ENCODE measurements at regions of chr17 and their contacts with region 1.

Region 1: GRCh38 chr17:16285957-16286640 is 67.2 kb downstream of the CENPV start:
- DNase-seq: peak; percentile 98
- ATAC-seq: peak; percentile 79
- H3K4me3 ChIP-seq: peak overlapping the region; percentile 5; the same call in 1 of the 2 replicates
- H3K27ac ChIP-seq: peak overlapping the region; percentile 98
- H3K4me1 ChIP-seq: peaks cover 24% of the 10 kb centered on the region
- H3K27me3 ChIP-seq: no peaks in the 10 kb centered on the region
- CTCF ChIP-seq: peak; percentile 45
- POLR2A ChIP-seq: peak; percentile 5; the same call in 1 of the 2 replicates
- RAD21 ChIP-seq: peak; percentile 26; the same call in 1 of the 2 replicates

Region 2: GRCh38 chr17:16068323-16068722 is 217.8 kb before region 1 on chr17:
- CTCF ChIA-PET with region 1: no interaction called
- POLR2A ChIA-PET with region 1: no interaction called
- dilution Hi-C with region 1: no loop called
- in situ Hi-C with region 1: no loop called
- intact Hi-C with region 1: no loop called
- DNase-seq: peak; percentile 17
- ATAC-seq: peak; percentile 35; the same call in 1 of the 2 replicates
- H3K4me3 ChIP-seq: no peak overlapping the region
- H3K27ac ChIP-seq: no peak overlapping the region
- H3K4me1 ChIP-seq: peaks cover 4% of the 10 kb centered on the region; the same call in 1 of the 2 replicates
- H3K27me3 ChIP-seq: no peaks in the 10 kb centered on the region
- CTCF ChIP-seq: no peak
- POLR2A ChIP-seq: no peak
- RAD21 ChIP-seq: no peak

Region 3: DNA sequence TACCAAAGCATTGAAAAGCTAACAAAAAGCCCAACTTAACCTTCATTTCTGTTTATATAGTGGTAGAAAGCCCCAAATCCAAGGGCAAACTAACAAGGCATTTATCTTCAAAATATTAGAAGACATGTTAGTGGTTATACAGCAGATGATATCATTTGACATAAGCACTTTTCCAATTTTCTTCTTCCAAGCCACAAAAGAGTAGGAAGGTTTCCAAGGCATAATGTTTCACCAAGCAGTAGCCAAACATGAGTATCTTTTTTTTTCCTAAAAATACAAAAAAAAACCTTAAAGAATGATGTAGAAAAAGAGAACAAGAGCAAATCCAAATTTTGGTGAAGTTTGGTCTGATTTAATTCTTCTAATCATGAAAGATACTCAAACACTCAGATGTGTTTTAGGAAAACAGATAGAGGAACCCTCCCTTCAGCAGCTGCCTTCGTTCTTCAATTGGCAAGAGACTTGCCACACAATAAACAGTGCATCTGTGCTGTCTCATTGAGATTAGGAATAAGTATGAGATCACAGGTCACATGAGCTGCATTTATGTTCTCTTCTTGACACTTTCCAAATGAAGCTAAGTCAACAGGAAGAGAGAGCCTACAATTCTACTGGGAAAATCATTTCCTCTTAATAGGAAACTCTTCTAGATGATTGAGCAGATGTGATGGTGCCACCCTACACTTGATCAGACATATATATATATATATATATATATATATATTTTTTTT is 179.8 kb before region 1 on chr17:
- CTCF ChIA-PET with region 1: no interaction called
- POLR2A ChIA-PET with region 1: no interaction called
- dilution Hi-C with region 1: no loop called
- in situ Hi-C with region 1: no loop called
- intact Hi-C with region 1: no loop called
- DNase-seq: peak; percentile 79
- ATAC-seq: peak; percentile 62
- H3K4me3 ChIP-seq: no peak overlapping the region
- H3K27ac ChIP-seq: no peak overlapping the region
- H3K4me1 ChIP-seq: 0 out of 2 replicates have a peak, but pooled peaks cover 2% of the 10 kb centered on the region
- H3K27me3 ChIP-seq: no peaks in the 10 kb centered on the region
- CTCF ChIP-seq: no peak
- POLR2A ChIP-seq: no peak
- RAD21 ChIP-seq: no peak

Region 4: DNA sequence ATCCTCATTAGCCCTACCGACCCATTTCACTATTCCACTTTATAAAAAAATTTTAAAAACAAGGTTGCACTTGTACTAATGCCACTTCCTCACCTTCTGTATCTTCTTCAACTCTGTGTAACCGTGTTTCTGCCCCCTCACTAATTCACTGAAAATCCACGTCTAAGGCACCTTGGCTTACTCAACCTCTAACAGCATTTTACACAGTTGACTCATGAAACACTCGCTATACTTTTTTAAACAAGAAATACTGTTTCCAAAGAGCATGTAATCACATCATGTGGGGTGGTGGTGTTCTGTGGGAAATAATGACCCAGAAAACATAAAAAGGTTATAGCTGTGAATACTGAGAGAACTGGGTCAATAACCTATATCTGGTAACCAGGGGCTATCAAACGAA is 150.6 kb before region 1 on chr17:
- CTCF ChIA-PET with region 1: no interaction called
- POLR2A ChIA-PET with region 1: no interaction called
- dilution Hi-C with region 1: no loop called
- in situ Hi-C with region 1: no loop called
- intact Hi-C with region 1: no loop called
- DNase-seq: peak; percentile 69
- ATAC-seq: peak; percentile 71
- H3K4me3 ChIP-seq: no peak overlapping the region
- H3K27ac ChIP-seq: no peak overlapping the region
- H3K4me1 ChIP-seq: peaks cover 3% of the 10 kb centered on the region
- H3K27me3 ChIP-seq: no peaks in the 10 kb centered on the region
- CTCF ChIP-seq: no peak
- POLR2A ChIP-seq: no peak
- RAD21 ChIP-seq: no peak

Region 5: GRCh38 chr17:16215273-16215964 is 70.7 kb before region 1 on chr17 and contains the start of gene NCOR1:
- CTCF ChIA-PET with region 1: interaction called, 6 read pairs
- POLR2A ChIA-PET with region 1: no interaction called
- dilution Hi-C with region 1: no loop called
- in situ Hi-C with region 1: no loop called
- intact Hi-C with region 1: loop called (anchors 1 kb)
- DNase-seq: peak; percentile 93
- ATAC-seq: peak; percentile 95
- H3K4me3 ChIP-seq: peak within 1 kb of the TSS; percentile 71
- H3K27ac ChIP-seq: peak within 1 kb of the TSS; percentile 87
- H3K4me1 ChIP-seq: peaks cover 6% of the 10 kb centered on the region
- H3K27me3 ChIP-seq: no peaks in the 10 kb centered on the region
- CTCF ChIP-seq: peak; percentile 43
- POLR2A ChIP-seq: peak; percentile 86
- RAD21 ChIP-seq: peak; percentile 23
- total RNA-seq, gene NCOR1: 78.0 and 80.3 TPM in 2 replicates

Region 6: DNA sequence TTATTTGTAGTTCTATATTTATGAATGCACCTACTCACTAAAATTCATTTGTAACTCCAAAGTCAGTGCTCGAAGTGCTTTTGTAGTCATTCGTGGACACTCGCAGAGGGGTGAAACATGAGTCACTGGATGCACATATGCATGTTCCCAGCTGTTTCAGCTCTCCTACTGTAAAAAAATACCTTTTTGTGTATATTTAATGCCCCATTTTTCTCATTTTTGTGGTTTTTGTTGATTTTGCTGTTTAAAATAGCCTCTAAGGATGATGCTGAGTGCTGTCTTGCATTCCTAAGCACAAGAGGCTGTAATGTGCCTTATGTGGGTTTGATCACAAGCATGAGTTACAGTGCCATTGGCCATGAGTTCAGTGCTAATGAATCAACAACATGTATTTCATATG is 36.5 kb after region 1 on chr17:
- CTCF ChIA-PET with region 1: no interaction called
- POLR2A ChIA-PET with region 1: no interaction called
- dilution Hi-C with region 1: no loop called
- in situ Hi-C with region 1: no loop called
- intact Hi-C with region 1: loop called (anchors 2 kb)
- DNase-seq: peak; percentile 96
- ATAC-seq: peak; percentile 99
- H3K4me3 ChIP-seq: no peak overlapping the region
- H3K27ac ChIP-seq: no peak overlapping the region
- H3K4me1 ChIP-seq: 0 out of 2 replicates have a peak, but pooled peaks cover 2% of the 10 kb centered on the region
- H3K27me3 ChIP-seq: no peaks in the 10 kb centered on the region
- CTCF ChIP-seq: no peak
- POLR2A ChIP-seq: no peak
- RAD21 ChIP-seq: no peak

Region 7: DNA sequence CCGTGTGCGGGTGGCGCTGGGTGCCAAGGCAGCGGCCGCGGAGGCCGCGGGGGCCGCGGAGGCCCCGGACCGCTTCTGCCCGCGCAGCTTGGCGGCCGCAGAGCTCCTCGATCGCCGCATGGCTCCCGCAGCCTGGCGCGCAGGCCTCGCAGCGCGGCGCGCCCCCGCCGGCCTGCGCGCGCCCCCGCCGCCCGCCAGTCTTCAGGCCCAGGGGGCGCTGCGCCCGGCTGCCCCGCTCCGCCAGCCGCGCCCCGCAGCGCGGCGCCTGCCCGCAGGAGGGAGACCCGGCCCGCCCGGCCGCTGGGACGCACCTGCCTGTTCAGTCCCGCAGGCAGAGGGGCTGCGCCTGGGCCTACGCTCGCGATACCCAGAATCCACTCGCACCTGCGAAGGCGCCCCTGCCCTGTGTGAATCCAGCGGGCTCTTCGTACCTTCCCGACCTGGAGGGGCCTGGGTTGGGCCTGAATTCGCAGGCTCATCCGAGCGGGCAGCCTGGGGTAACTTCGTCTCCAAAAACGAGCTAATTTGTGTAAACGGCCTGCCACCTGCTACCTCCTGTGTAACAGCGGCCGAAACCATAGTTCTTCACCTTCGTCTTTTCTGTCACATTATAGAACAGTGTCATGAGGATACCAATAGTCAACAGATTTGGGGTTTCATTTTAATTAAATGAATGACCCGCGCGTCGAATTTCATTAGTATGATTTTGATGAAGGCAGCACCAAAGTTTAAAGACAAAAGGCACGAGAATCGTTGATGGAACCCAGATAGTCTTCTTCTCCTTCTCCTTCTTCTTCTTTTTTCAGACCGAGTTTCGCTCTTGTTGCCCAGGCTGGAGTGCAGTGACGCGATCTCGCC is 67.4 kb after region 1 on chr17 and contains the start of gene CENPV:
- CTCF ChIA-PET with region 1: interaction called, 3 read pairs
- POLR2A ChIA-PET with region 1: no interaction called
- dilution Hi-C with region 1: no loop called
- in situ Hi-C with region 1: no loop called
- intact Hi-C with region 1: loop called (anchors 5 kb)
- DNase-seq: peak; percentile 34
- ATAC-seq: peak; percentile 82
- H3K4me3 ChIP-seq: peak within 1 kb of the TSS; percentile 73
- H3K27ac ChIP-seq: peak within 1 kb of the TSS; percentile 33
- H3K4me1 ChIP-seq: 0 out of 2 replicates have a peak, but pooled peaks cover 2% of the 10 kb centered on the region
- H3K27me3 ChIP-seq: no peaks in the 10 kb centered on the region
- CTCF ChIP-seq: peak; percentile 37
- POLR2A ChIP-seq: no peak
- RAD21 ChIP-seq: no peak
- total RNA-seq, gene CENPV: 35.3 and 38.6 TPM in 2 replicates

Region 8: GRCh38 chr17:16477255-16477654 is 191.2 kb after region 1 on chr17:
- CTCF ChIA-PET with region 1: no interaction called
- POLR2A ChIA-PET with region 1: no interaction called
- dilution Hi-C with region 1: no loop called
- in situ Hi-C with region 1: no loop called
- intact Hi-C with region 1: no loop called
- DNase-seq: peak; percentile 89
- ATAC-seq: peak; percentile 98
- H3K4me3 ChIP-seq: no peak overlapping the region
- H3K27ac ChIP-seq: peak overlapping the region; percentile 83
- H3K4me1 ChIP-seq: peaks cover 13% of the 10 kb centered on the region; the same call in 1 of the 2 replicates
- H3K27me3 ChIP-seq: no peaks in the 10 kb centered on the region
- CTCF ChIP-seq: no peak
- POLR2A ChIP-seq: no peak
- RAD21 ChIP-seq: no peak